Endothelial cell of umbilical vein (primary cell): ENCODE measurements at regions of chr7 and their contacts with region 1.

Region 1: DNA sequence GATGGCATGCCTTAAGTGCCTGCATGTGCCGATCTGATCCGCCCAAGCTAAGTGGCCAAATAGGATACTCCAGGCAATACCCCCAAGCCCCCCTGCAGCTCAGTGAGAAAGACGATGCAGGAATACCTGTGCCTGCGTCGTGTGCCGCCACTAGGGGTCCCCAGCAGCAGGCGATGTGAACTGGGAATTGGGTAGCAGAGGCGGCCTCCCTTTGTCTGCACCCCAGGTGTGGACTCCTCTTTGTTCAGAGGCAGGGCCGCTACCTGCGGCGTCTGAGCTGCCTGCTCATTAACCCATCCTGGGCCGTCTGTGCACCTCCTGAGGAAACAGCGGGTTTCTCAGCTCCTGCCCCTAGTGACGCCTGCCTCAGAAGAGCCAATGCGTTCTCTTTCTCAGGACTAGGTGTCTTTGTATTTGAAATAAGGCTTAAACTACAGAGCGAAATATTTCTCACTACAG is 4.8 kb upstream of the CHN2 start:
- DNase-seq: peak; percentile 49
- H3K4me3 ChIP-seq: no peak overlapping the region
- H3K27ac ChIP-seq: no peak overlapping the region
- H3K4me1 ChIP-seq: peaks cover 3% of the 10 kb centered on the region
- H3K27me3 ChIP-seq: peaks cover 11 to 19% of the 10 kb centered on the region in 2 experiments
- CTCF ChIP-seq: peak; percentile 71 to 96
- POLR2A ChIP-seq: no peak

Region 2: GRCh38 chr7:29105752-29106668 is 83.8 kb before region 1 on chr7:
- CTCF ChIA-PET with region 1: interaction called, 20 read pairs
- POLR2A ChIA-PET with region 1: no interaction called
- dilution Hi-C with region 1: no loop called
- intact Hi-C with region 1: no loop called
- DNase-seq: peak; percentile 66
- H3K4me3 ChIP-seq: no peak overlapping the region
- H3K27ac ChIP-seq: no peak overlapping the region
- H3K4me1 ChIP-seq: no peaks in the 10 kb centered on the region
- H3K27me3 ChIP-seq: peaks cover 8 to 13% of the 10 kb centered on the region in 2 experiments
- CTCF ChIP-seq: peak; percentile 69 to 75
- POLR2A ChIP-seq: no peak

Region 3: GRCh38 chr7:29167721-29168120 is 22.1 kb before region 1 on chr7:
- CTCF ChIA-PET with region 1: interaction called, 17 read pairs
- POLR2A ChIA-PET with region 1: no interaction called
- dilution Hi-C with region 1: no loop called
- intact Hi-C with region 1: no loop called
- DNase-seq: no peak
- H3K4me3 ChIP-seq: no peak overlapping the region
- H3K27ac ChIP-seq: no peak overlapping the region
- H3K4me1 ChIP-seq: no peaks in the 10 kb centered on the region
- H3K27me3 ChIP-seq: peaks cover 4 to 11% of the 10 kb centered on the region in 2 experiments
- CTCF ChIP-seq: no peak
- POLR2A ChIP-seq: no peak

Region 4: DNA sequence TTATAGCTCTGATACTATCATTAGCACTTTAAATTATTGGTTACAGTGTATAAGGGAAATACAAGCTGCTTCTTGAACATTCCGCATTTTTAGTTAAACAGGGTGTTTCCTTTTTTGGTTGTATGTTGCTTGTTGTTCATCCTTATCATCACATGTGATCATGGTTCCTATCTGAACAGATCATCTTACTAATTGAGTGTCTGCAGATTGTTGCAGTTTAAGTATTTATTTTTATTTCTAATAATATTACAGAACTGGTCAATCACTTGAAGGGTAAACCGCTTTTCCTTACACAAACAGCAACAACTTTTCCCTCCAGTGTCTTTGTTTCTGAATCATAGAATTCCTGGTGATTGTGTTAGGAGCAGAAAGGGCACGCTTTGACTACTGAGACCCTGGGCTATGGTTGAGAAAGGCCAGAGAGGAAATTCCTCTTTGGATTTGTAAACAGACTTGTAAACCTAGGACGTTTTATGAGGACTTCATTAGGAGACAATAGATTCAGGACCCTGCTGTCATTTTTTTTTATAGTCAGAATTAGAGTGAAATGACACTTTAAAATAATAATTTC is 42.0 kb after region 1 on chr7:
- CTCF ChIA-PET with region 1: interaction called, 10 read pairs
- POLR2A ChIA-PET with region 1: no interaction called
- dilution Hi-C with region 1: no loop called
- intact Hi-C with region 1: no loop called
- DNase-seq: no peak
- H3K4me3 ChIP-seq: no peak overlapping the region
- H3K27ac ChIP-seq: no peak overlapping the region
- H3K4me1 ChIP-seq: peaks cover 5% of the 10 kb centered on the region
- H3K27me3 ChIP-seq: peaks cover 0 to 2% of the 10 kb centered on the region in 2 experiments
- CTCF ChIP-seq: no peak
- POLR2A ChIP-seq: no peak

Region 5: DNA sequence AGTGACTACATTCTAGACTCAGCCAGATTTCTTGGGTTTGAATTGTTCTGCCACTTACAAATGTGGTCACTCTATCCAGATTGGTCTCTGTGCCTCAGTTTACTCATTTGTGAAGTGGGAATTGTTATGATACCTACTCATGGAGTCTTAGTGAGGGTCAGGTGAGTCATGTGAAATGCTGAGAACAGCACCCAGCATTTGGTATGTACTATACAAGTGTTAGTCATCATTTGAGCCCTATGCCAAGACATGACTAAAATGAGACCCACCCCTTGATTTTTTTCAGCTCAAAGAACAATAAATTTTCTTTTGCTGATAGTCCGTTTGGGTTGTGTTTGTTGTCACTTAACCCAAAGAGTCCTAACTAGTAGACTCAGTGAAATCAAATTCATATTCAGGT is 97.6 kb after region 1 on chr7:
- CTCF ChIA-PET with region 1: interaction called, 13 read pairs
- POLR2A ChIA-PET with region 1: no interaction called
- dilution Hi-C with region 1: no loop called
- intact Hi-C with region 1: no loop called
- DNase-seq: peak; percentile 64
- H3K4me3 ChIP-seq: no peak overlapping the region
- H3K27ac ChIP-seq: no peak overlapping the region
- H3K4me1 ChIP-seq: peaks cover 6% of the 10 kb centered on the region
- H3K27me3 ChIP-seq: no peaks in the 10 kb centered on the region
- CTCF ChIP-seq: no peak
- POLR2A ChIP-seq: no peak

Region 6: DNA sequence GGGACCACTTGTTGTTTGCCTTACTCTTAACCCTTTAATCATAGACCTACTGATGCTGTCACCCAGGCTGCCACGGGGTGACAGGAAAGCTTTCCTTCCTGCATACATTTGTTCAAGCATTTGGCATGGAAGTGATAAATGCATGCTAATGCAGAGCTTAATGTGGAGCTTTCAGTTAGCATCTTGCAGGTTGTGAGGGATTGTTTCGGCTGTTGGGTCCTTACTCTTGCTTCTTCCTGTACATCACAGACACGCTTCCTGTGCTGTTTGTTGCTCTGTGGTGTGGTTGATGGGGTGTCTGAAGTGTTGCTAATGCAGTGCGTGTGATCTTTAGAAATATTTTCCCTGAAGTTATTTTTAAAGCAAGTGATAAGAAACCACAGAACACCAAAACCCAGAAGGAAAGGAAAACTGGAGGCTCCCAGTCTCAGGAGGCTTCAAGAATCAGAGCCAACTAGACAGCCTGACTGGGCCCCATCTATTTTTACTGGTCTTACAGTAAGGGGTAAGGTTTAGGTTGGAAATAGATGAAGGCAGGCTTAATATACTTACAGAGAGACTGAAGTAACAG is 147.9 kb after region 1 on chr7:
- CTCF ChIA-PET with region 1: interaction called, 105 read pairs
- POLR2A ChIA-PET with region 1: no interaction called
- dilution Hi-C with region 1: no loop called
- intact Hi-C with region 1: no loop called
- DNase-seq: no peak
- H3K4me3 ChIP-seq: no peak overlapping the region
- H3K27ac ChIP-seq: no peak overlapping the region
- H3K4me1 ChIP-seq: no peaks in the 10 kb centered on the region
- H3K27me3 ChIP-seq: no peaks in the 10 kb centered on the region
- CTCF ChIP-seq: no peak
- POLR2A ChIP-seq: no peak

Region 7: GRCh38 chr7:29408841-29409243 is 219.1 kb after region 1 on chr7:
- CTCF ChIA-PET with region 1: interaction called, 226 read pairs
- POLR2A ChIA-PET with region 1: no interaction called
- dilution Hi-C with region 1: no loop called
- intact Hi-C with region 1: loop called (anchors 1 kb)
- DNase-seq: peak; percentile 73
- H3K4me3 ChIP-seq: no peak overlapping the region
- H3K27ac ChIP-seq: no peak overlapping the region
- H3K4me1 ChIP-seq: no peaks in the 10 kb centered on the region
- H3K27me3 ChIP-seq: no peaks in the 10 kb centered on the region
- CTCF ChIP-seq: peak; percentile 61 to 67
- POLR2A ChIP-seq: no peak

Region 8: GRCh38 chr7:30164567-30164966 is 974.8 kb after region 1 on chr7:
- CTCF ChIA-PET with region 1: no interaction called
- POLR2A ChIA-PET with region 1: no interaction called
- dilution Hi-C with region 1: no loop called
- intact Hi-C with region 1: no loop called
- DNase-seq: peak; percentile 74
- H3K4me3 ChIP-seq: no peak overlapping the region
- H3K27ac ChIP-seq: no peak overlapping the region
- H3K4me1 ChIP-seq: peaks cover 31% of the 10 kb centered on the region
- H3K27me3 ChIP-seq: peaks cover 0 to under 1% of the 10 kb centered on the region in 2 experiments
- CTCF ChIP-seq: peak; percentile 37
- POLR2A ChIP-seq: no peak